ENCODE measurements at regions of chr19 and their contacts with region 1.

Region 1: GRCh38 chr19:1652471-1653299 is at the start of gene TCF3:
- DNase-seq: peak in 1 of 2 donors; percentile 99
- H3K4me3 ChIP-seq: peak within 1 kb of the TSS; percentile 57 to 91
- H3K27ac ChIP-seq: peak within 1 kb of the TSS; percentile 100
- H3K4me1 ChIP-seq: peaks cover 31% of the 10 kb centered on the region
- H3K27me3 ChIP-seq: no peaks in the 10 kb centered on the region
- CTCF ChIP-seq: peak in 1 of 3 experiments; percentile 12
- POLR2A ChIP-seq: no peak
- total RNA-seq, gene TCF3: 26.0 TPM

Region 2: GRCh38 chr19:1577090-1577928 is 75.4 kb before region 1 on chr19:
- intact Hi-C with region 1: no loop called
- DNase-seq: no peak
- H3K4me3 ChIP-seq: no peak overlapping the region
- H3K27ac ChIP-seq: no peak overlapping the region
- H3K4me1 ChIP-seq: no peaks in the 10 kb centered on the region
- H3K27me3 ChIP-seq: no peaks in the 10 kb centered on the region
- CTCF ChIP-seq: no peak
- POLR2A ChIP-seq: no peak

Region 3: DNA sequence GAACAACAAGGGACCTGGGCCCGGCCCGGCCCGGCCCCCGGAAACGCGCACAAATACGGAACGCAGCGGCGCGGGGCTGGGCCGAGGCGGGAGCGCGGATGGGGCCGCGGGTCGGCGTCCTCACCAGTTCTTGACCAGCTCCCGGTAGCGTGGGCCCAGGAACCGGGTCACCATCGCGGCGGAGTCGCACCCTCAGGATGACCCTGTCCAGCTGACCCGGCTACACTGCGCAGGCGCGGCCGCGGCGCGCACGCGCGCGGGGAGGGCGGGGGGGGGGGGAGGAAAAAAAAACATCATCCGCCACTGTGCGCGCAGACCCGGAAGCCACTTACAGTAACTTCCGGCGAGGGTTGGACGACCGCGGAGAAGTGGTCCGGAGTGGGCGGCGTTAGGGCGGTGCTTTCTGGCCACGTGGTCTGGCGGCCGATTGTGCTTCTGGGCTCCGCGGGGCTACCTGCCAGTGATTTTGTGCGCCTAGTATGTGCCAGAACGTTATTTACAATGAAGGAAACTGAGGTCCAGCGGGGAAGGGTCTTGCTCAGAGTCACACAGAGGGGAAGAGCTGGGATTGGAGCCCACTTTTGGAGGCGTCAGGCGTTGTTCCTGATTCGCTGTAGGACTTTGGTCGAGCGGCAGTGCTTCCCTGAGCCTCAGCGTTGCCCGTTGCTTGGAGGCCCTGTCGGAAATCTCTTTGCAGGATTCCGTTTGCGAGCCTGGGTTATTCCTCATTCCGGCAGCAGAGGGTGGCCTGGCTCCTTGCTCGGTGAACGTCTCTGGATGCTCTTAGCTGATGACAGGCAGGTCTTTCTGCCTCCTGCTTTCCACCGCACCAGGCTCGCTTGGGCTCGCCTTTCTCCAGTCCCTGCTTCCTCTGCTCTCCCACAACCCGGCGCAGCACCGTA is 47.2 kb before region 1 on chr19 and contains the start of gene UQCR11:
- intact Hi-C with region 1: loop called (anchors 2 kb)
- DNase-seq: peak in 1 of 2 donors; percentile 97
- H3K4me3 ChIP-seq: peak within 1 kb of the TSS; percentile 75 to 99
- H3K27ac ChIP-seq: peak within 1 kb of the TSS; percentile 83
- H3K4me1 ChIP-seq: peaks cover 40% of the 10 kb centered on the region
- H3K27me3 ChIP-seq: no peaks in the 10 kb centered on the region
- CTCF ChIP-seq: peak in 2 of 3 experiments; percentile 34 to 48
- POLR2A ChIP-seq: no peak
- total RNA-seq, gene UQCR11: 79.8 TPM

Region 4: DNA sequence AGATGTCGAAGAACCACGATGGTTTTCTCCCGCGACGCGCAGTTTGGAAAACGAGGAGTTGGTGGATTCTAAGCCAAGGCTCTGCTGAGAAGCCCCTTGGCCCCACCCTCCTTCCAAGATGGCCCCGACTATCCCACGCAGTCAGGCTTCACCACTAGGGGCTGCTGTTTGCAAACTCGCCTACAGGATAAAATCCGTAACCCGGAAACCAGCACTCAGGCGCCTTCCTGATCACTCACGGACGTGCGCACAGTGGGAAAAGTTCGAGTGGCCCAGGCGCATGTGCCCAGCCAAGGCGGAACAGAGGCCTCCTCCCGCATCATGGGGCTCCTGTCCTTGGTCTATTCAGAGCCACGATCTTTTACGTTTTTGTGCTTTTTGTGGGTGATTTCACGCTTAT is 28.2 kb before region 1 on chr19:
- intact Hi-C with region 1: no loop called
- DNase-seq: no peak
- H3K4me3 ChIP-seq: no peak overlapping the region
- H3K27ac ChIP-seq: no peak overlapping the region
- H3K4me1 ChIP-seq: no peaks in the 10 kb centered on the region
- H3K27me3 ChIP-seq: no peaks in the 10 kb centered on the region
- CTCF ChIP-seq: peak in 1 of 3 experiments; percentile 22
- POLR2A ChIP-seq: no peak